Activated T-helper 1 cell treated with anti-CD3 and anti-CD28 coated beads, Interleukin-12 subunit alpha, Interleukin-12 subunit beta, Interleukin-2, Interleukin-4 antibody, amounts not matched to agents 30 ng/mL and 10 ng/mL and 1 ng/mL, durations not matched to agents 14 hours and 24 hours and 36 hours (primary cell): ENCODE measurements at regions of chr17 and their contacts with region 1.

Region 1: GRCh38 chr17:57255776-57256681 is at the start of gene MSI2:
- DNase-seq: peak; percentile 84
- H3K4me3 Mint-ChIP-seq: peak within 1 kb of the TSS; percentile 89
- H3K27ac Mint-ChIP-seq: peak within 1 kb of the TSS; percentile 93
- H3K4me1 Mint-ChIP-seq: peaks cover 47% of the 10 kb centered on the region
- H3K27me3 Mint-ChIP-seq: no peaks in the 10 kb centered on the region
- total RNA-seq, gene MSI2: 272 and 278 TPM in 2 replicates

Region 2: GRCh38 chr17:57084802-57085447 is 171.1 kb before region 1 on chr17 and contains the start of gene AKAP1:
- intact Hi-C with region 1: loop called (anchors 1 kb)
- DNase-seq: peak; percentile 96
- H3K4me3 Mint-ChIP-seq: peak within 1 kb of the TSS; percentile 92
- H3K27ac Mint-ChIP-seq: peak within 1 kb of the TSS; percentile 87
- H3K4me1 Mint-ChIP-seq: peaks cover 28% of the 10 kb centered on the region
- H3K27me3 Mint-ChIP-seq: peaks cover 9% of the 10 kb centered on the region
- total RNA-seq, gene AKAP1: 53.8 and 59.9 TPM in 2 replicates

Region 3: DNA sequence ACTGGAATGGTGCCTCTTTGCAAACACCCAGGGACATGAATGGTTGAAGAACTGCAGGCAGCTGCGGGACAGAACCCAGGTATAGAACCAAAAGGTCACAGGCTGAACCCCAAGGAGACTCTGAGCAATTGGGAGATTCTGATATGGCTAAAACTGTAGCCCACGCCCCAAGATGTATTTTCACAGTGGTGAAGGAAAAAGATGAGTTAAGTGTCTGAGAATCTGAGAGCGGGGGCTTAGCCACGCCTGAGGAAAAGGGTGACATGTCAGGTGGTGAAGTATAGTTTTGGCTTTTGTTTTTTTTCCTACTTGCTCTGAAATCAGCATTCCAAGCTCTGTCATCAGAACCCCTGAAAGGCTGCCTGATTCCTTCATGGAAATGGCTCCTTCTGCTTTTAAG is 97.7 kb before region 1 on chr17:
- intact Hi-C with region 1: no loop called
- DNase-seq: no peak
- H3K4me3 Mint-ChIP-seq: no peak overlapping the region
- H3K27ac Mint-ChIP-seq: no peak overlapping the region
- H3K4me1 Mint-ChIP-seq: no peaks in the 10 kb centered on the region
- H3K27me3 Mint-ChIP-seq: peaks cover 7% of the 10 kb centered on the region

Region 4: DNA sequence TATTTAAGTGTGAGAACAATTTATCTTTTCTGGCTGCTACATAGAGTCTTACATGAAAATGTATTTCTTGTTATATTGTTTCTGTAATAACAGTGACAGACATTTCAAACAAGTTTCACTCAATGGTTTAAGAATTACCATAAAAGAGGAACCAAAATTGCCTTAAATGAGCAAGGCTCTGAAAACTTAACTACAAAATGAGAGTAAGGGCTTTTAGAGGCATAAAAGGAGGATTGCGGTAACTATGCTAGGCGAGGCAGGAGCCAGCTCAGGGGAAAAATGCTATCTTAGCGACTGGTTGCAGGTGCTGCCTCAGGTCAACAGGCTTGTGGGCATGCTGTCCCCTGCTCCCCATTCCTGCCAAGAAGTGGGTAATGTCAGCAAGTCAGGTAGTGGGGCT is 81.4 kb before region 1 on chr17:
- intact Hi-C with region 1: no loop called
- DNase-seq: no peak
- H3K4me3 Mint-ChIP-seq: no peak overlapping the region
- H3K27ac Mint-ChIP-seq: no peak overlapping the region
- H3K4me1 Mint-ChIP-seq: no peaks in the 10 kb centered on the region
- H3K27me3 Mint-ChIP-seq: peaks cover 31% of the 10 kb centered on the region

Region 5: DNA sequence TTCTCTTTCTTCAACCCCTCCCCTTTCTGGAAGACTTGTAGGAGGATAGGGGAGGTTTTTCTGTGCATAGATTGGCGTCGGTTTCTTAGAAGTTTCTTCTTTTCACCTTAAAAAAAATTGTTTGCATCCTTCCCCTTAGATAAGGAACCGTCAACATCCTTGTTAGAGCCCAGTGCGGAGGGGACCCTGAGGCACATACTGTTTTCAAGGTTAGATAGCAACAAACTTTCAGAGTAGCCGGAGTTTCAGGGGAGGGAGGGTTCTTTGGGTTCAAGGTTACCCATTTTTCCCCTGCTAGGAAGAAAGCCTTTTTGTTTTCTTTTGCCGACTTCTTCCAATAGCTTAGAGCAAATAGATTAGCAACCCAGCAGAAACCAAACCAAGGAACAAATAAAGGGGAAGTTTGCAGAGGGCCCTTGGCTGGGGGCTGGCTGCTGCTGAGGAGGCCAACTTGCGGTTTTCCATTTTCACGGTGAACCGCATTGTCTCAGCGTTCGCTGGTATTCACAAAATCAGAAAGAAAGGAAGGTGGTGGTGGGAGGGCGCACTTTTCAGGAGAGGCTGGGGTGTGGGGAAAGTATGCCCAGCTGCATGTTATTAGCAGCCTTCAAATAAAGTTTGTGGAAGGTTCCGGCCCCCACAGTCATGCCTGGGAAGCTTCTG is 29.1 kb after region 1 on chr17:
- intact Hi-C with region 1: loop called (anchors 1 kb)
- DNase-seq: peak; percentile 64
- H3K4me3 Mint-ChIP-seq: peak overlapping the region; percentile 59
- H3K27ac Mint-ChIP-seq: peak overlapping the region; percentile 94
- H3K4me1 Mint-ChIP-seq: peaks cover 94% of the 10 kb centered on the region
- H3K27me3 Mint-ChIP-seq: no peaks in the 10 kb centered on the region

Region 6: GRCh38 chr17:57294629-57295535 is 38.9 kb after region 1 on chr17:
- intact Hi-C with region 1: loop called (anchors 5 kb)
- DNase-seq: no peak
- H3K4me3 Mint-ChIP-seq: no peak overlapping the region
- H3K27ac Mint-ChIP-seq: peak overlapping the region; percentile 50
- H3K4me1 Mint-ChIP-seq: peaks cover 34% of the 10 kb centered on the region
- H3K27me3 Mint-ChIP-seq: no peaks in the 10 kb centered on the region

Region 7: GRCh38 chr17:57455063-57455914 is 199.3 kb after region 1 on chr17:
- intact Hi-C with region 1: loop called (anchors 2 kb)
- DNase-seq: peak; percentile 33
- H3K4me3 Mint-ChIP-seq: peak overlapping the region; percentile 55
- H3K27ac Mint-ChIP-seq: peak overlapping the region; percentile 91
- H3K4me1 Mint-ChIP-seq: peaks cover 83% of the 10 kb centered on the region
- H3K27me3 Mint-ChIP-seq: no peaks in the 10 kb centered on the region

Region 8: DNA sequence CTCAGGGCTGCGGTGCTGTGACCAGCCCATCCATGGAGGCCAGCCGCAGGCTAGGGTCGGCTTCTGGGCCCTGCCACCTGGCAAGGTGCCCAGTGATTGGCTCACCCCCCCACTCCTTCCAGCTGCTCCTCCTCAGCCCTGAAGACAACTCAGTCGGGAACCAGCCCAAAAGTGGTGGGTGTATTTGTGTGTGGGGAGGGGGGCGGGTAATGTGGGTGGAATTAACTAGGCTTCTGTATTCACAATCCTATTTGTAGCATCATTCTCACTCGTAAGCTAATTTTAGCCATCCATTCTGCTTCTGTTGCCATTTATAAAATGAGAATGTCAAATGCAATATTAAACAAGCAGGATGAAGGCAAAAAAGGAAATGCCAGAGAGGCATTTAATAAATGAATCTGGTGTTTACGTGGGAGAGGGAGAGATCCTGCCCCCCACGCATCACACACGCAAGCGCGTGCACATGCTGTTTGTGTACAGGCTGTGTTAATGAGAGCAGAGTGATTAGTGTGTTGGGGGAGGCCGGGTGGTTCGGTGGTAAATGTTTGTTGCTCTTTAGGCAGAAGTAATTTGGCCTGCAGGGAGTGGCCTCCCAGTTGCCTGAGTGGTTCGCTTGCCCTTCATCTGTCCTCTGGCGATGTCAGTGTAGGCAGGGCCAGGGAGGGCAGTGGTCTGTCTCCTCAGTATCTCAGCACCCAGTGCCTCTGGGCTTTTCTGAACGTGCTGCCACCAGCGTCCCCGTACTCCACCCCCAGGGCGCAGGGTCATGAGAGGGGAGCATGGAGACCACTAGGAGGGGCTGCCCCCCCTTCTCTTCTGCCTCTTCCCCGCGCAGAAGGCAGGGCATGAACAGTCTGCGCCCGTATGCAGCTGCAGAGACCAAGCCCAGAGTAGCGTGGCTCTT is 349.0 kb after region 1 on chr17:
- intact Hi-C with region 1: loop called (anchors 10 kb)
- DNase-seq: no peak
- H3K4me3 Mint-ChIP-seq: peak overlapping the region; percentile 54
- H3K27ac Mint-ChIP-seq: peak overlapping the region; percentile 94
- H3K4me1 Mint-ChIP-seq: peaks cover 70% of the 10 kb centered on the region
- H3K27me3 Mint-ChIP-seq: no peaks in the 10 kb centered on the region

Region 9: DNA sequence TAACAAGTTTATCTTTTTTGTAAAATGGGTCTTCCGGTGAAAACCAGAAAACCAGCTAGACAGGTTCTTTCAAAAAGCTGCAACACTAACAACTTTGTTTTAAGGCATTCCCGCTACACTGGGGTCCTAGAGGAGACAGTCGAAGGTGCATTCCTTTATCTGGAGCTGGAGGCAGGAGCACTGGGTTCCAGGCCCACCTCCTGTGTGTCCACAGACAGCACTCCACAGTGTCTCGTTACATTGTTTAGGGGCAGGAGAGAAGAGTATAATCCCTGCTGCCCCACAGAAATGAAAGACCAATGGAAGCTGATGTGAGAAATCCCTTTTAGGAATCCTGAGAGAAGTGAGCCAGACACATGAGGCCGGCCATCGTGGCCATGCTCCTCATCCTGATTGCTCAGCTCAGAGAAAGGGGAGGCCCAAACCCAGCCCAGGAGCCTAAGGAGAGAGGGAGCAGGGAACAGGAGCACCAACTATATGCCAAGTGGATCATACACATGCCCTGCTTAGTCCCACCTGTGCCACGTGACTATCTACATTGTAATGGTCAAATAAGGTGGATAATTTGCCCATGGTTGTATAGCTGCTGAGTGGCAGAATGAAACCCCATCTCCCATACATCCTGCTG is 429.6 kb after region 1 on chr17:
- intact Hi-C with region 1: no loop called
- DNase-seq: no peak
- H3K4me3 Mint-ChIP-seq: no peak overlapping the region
- H3K27ac Mint-ChIP-seq: no peak overlapping the region
- H3K4me1 Mint-ChIP-seq: no peaks in the 10 kb centered on the region
- H3K27me3 Mint-ChIP-seq: peaks cover 4% of the 10 kb centered on the region